ENCODE measurements at regions of chr2 and their contacts with region 1.

Region 1: GRCh38 chr2:230472621-230473018 is 56.6 kb downstream of the SP100 start:
- DNase-seq: no peak
- ATAC-seq: peak; percentile 75
- H3K4me3 Mint-ChIP-seq: peak overlapping the region; percentile 17
- H3K27ac Mint-ChIP-seq: peak overlapping the region; percentile 89
- H3K4me1 Mint-ChIP-seq: peaks cover 56% of the 10 kb centered on the region
- H3K27me3 Mint-ChIP-seq: no peaks in the 10 kb centered on the region
- CTCF ChIP-seq: no peak

Region 2: GRCh38 chr2:230326453-230327417 is 145.9 kb before region 1 on chr2 and contains the start of gene SP140L:
- CTCF ChIA-PET with region 1: no interaction called
- POLR2A ChIA-PET with region 1: interaction called, 13 read pairs
- intact Hi-C with region 1: no loop called
- DNase-seq: peak; percentile 60
- ATAC-seq: peak; percentile 95
- H3K4me3 Mint-ChIP-seq: peak within 1 kb of the TSS; percentile 96
- H3K27ac Mint-ChIP-seq: peak within 1 kb of the TSS; percentile 99
- H3K4me1 Mint-ChIP-seq: peaks cover 79% of the 10 kb centered on the region
- H3K27me3 Mint-ChIP-seq: no peaks in the 10 kb centered on the region
- CTCF ChIP-seq: no peak
- total RNA-seq, gene SP140L: 106 and 112 TPM in 2 replicates

Region 3: GRCh38 chr2:230447455-230448451 is 24.9 kb before region 1 on chr2:
- CTCF ChIA-PET with region 1: interaction called, 12 read pairs
- POLR2A ChIA-PET with region 1: interaction called, 30 read pairs
- intact Hi-C with region 1: loop called (anchors 1 kb)
- DNase-seq: no peak
- ATAC-seq: peak; percentile 81
- H3K4me3 Mint-ChIP-seq: peak overlapping the region; percentile 83
- H3K27ac Mint-ChIP-seq: peak overlapping the region; percentile 99
- H3K4me1 Mint-ChIP-seq: peaks cover 93% of the 10 kb centered on the region
- H3K27me3 Mint-ChIP-seq: no peaks in the 10 kb centered on the region
- CTCF ChIP-seq: no peak

Region 4: GRCh38 chr2:230537531-230537976 is 64.9 kb after region 1 on chr2:
- CTCF ChIA-PET with region 1: no interaction called
- POLR2A ChIA-PET with region 1: no interaction called
- intact Hi-C with region 1: loop called (anchors 5 kb)
- DNase-seq: no peak
- ATAC-seq: peak; percentile 85
- H3K4me3 Mint-ChIP-seq: peak overlapping the region; percentile 53
- H3K27ac Mint-ChIP-seq: peak overlapping the region; percentile 79
- H3K4me1 Mint-ChIP-seq: peaks cover 55% of the 10 kb centered on the region
- H3K27me3 Mint-ChIP-seq: no peaks in the 10 kb centered on the region
- CTCF ChIP-seq: no peak

Region 5: DNA sequence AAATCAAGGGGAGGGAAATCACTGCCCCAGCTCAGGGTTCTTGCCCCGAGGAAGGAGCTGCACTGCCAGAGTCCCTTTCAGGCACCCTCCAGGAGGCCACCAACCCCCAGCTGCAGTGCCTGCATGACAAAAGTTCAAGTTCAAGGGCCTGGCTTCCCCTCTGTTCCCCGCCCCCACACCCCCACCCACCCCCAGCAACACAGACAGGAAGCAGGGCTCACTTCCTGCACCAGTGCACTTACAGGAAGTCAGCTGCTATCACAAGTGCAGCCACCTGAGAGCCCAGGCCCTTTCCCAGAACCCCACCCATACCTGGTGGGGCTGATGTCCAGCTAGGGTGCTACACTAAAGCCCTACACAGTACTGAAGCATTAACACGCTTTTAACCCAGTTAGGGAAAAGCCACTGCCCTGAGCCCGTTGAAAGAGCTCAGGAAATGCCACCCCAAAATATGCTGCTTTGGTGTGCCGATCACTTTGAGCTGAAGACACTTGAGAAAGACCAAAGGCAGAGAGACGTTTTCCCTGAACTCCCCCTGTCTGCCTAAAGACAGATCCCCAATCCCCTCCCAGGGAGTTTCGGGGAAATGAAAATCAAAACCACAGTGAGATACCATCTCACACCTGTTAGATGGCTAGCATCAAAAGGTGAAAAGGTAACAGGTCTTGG is 130.1 kb after region 1 on chr2:
- CTCF ChIA-PET with region 1: no interaction called
- POLR2A ChIA-PET with region 1: interaction called, 33 read pairs
- intact Hi-C with region 1: no loop called
- DNase-seq: peak; percentile 41
- ATAC-seq: peak; percentile 80
- H3K4me3 Mint-ChIP-seq: peak overlapping the region; percentile 66
- H3K27ac Mint-ChIP-seq: peak overlapping the region; percentile 96
- H3K4me1 Mint-ChIP-seq: peaks cover 94% of the 10 kb centered on the region
- H3K27me3 Mint-ChIP-seq: no peaks in the 10 kb centered on the region
- CTCF ChIP-seq: no peak